ENCODE measurements at regions of chr2 and their contacts with region 1.

Region 1: GRCh38 chr2:15939854-15940660 is at the start of gene MYCN:
- DNase-seq: peak; percentile 44 to 72
- ATAC-seq: peak; percentile 46 to 61
- H3K4me3 ChIP-seq: peak within 1 kb of the TSS; percentile 37
- H3K27ac ChIP-seq: no peak within 1 kb of the TSS
- H3K4me1 ChIP-seq: peaks cover 24% of the 10 kb centered on the region
- CTCF ChIP-seq: peak; percentile 88
- EP300 ChIP-seq: no peak
- POLR2A ChIP-seq: no peak
- RAD21 ChIP-seq: peak; percentile 88 to 95
- polyA plus RNA-seq, gene MYCN: not detected in 2 replicates

Region 2: GRCh38 chr2:15925819-15926218 is 14.2 kb before region 1 on chr2:
- CTCF ChIA-PET with region 1: interaction called, 14 read pairs
- POLR2A ChIA-PET with region 1: interaction called, 7 read pairs
- DNase-seq: no peak
- ATAC-seq: no peak
- H3K4me3 ChIP-seq: no peak overlapping the region
- H3K27ac ChIP-seq: no peak overlapping the region
- H3K4me1 ChIP-seq: no peaks in the 10 kb centered on the region
- CTCF ChIP-seq: no peak
- EP300 ChIP-seq: no peak
- POLR2A ChIP-seq: no peak
- RAD21 ChIP-seq: no peak

Region 3: GRCh38 chr2:16507655-16508489 is 567.8 kb after region 1 on chr2:
- CTCF ChIA-PET with region 1: interaction called, 40 read pairs
- POLR2A ChIA-PET with region 1: no interaction called
- DNase-seq: peak; percentile 46 to 57
- ATAC-seq: peak; percentile 96 to 99
- H3K4me3 ChIP-seq: peak overlapping the region; percentile 56
- H3K27ac ChIP-seq: peak overlapping the region in 1 of 2 experiments; percentile 54; a peak in 2 of 6 replicates
- H3K4me1 ChIP-seq: peaks cover 5% of the 10 kb centered on the region; the same call in 1 of the 3 replicates
- CTCF ChIP-seq: peak; percentile 85
- EP300 ChIP-seq: no peak
- POLR2A ChIP-seq: no peak
- RAD21 ChIP-seq: peak; percentile 81 to 97

Measured in A549 (cell line).